Naive thymus-derived CD8-positive, alpha-beta T cell (primary cell): ENCODE measurements at regions of chr1 and their contacts with region 1.

Region 1: GRCh38 chr1:116418091-116418830 is 45.2 kb downstream of the ATP1A1 start:
- DNase-seq: peak; percentile 77 to 92 (median 87)
- ATAC-seq: peak; percentile 95 to 96
- H3K4me3 Mint-ChIP-seq: peak overlapping the region; percentile 86 to 94 (median 90)
- H3K27ac Mint-ChIP-seq: peak overlapping the region; percentile 93 to 99 (median 98)
- H3K4me1 Mint-ChIP-seq: peaks cover 11 to 52% (median 35%) of the 10 kb centered on the region in 4 donors
- H3K27me3 Mint-ChIP-seq: peaks cover 0 to 4% (median 0%) of the 10 kb centered on the region in 5 donors

Region 2: DNA sequence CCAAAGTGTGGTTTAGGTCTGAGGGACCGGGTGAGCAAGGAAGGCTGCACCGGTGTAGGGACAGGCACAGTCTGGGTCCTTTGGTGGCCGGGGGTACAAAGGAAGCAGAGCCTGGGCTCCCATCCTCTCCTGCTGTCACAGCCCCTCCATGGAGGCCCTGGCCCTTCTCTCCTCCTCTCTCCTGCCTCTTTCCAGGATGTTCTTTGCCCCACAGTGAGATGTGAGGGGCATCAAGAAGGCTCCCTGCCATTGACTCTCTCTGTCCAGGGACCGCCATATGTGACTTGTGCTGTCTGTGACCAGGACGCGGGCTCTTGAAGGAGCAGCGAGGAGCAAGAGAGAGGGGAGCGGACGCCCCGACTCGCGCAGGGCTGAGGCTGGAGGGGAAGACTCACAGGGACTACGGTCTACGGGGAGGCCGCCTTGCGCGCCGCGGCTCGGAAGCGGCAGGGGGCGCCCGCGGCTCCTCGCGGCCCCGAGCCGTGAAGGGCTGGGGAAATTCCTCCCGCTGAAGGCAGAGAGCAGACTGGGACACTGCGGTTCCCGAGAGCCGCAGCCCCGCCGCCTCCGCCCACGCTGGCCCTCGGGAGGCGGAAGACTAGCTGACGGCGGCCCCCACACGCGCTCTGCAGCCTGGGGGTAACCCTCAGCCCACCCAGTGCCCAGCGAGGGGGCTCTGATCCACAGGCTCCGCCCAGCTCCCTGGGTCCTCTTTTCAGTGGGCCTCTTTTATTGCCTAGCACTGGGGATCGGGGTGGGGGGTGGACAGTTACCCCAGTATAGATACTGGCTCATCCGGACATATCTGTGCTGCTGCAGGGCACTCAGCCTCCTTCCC is 266.3 kb before region 1 on chr1:
- POLR2A ChIA-PET with region 1: interaction called, 12 read pairs
- DNase-seq: peak; percentile 70 to 82 (median 76)
- ATAC-seq: peak; percentile 90 to 95
- H3K4me3 Mint-ChIP-seq: peak overlapping the region; percentile 75 to 89 (median 85)
- H3K27ac Mint-ChIP-seq: peak overlapping the region; percentile 85 to 97 (median 94)
- H3K4me1 Mint-ChIP-seq: peaks cover 21 to 36% (median 30%) of the 10 kb centered on the region in 4 donors
- H3K27me3 Mint-ChIP-seq: no peaks in the 10 kb centered on the region

Region 3: GRCh38 chr1:116372587-116373444 is 45.4 kb before region 1 on chr1 and contains the start of gene ATP1A1:
- POLR2A ChIA-PET with region 1: interaction called, 67 read pairs
- DNase-seq: peak; percentile 94 to 99 (median 97)
- ATAC-seq: peak; percentile 61 to 72
- H3K4me3 Mint-ChIP-seq: peak within 1 kb of the TSS; percentile 93 to 99 (median 97)
- H3K27ac Mint-ChIP-seq: peak within 1 kb of the TSS; percentile 92 to 99 (median 98)
- H3K4me1 Mint-ChIP-seq: peaks cover 28 to 55% (median 49%) of the 10 kb centered on the region in 4 donors
- H3K27me3 Mint-ChIP-seq: no peaks in the 10 kb centered on the region
- polyA plus RNA-seq, gene ATP1A1: 59.1 to 65.0 (median 60.6) TPM

Region 4: GRCh38 chr1:116401646-116402176 is 16.6 kb before region 1 on chr1:
- POLR2A ChIA-PET with region 1: interaction called, 11 read pairs
- DNase-seq: no peak
- ATAC-seq: no peak
- H3K4me3 Mint-ChIP-seq: no peak overlapping the region
- H3K27ac Mint-ChIP-seq: peak overlapping the region; percentile 30 to 95 (median 81)
- H3K4me1 Mint-ChIP-seq: peaks cover 21 to 40% (median 29%) of the 10 kb centered on the region in 4 donors
- H3K27me3 Mint-ChIP-seq: no peaks in the 10 kb centered on the region

Region 5: GRCh38 chr1:116429821-116430374 is 11.6 kb after region 1 on chr1:
- POLR2A ChIA-PET with region 1: interaction called, 14 read pairs
- DNase-seq: no peak
- ATAC-seq: no peak
- H3K4me3 Mint-ChIP-seq: peak overlapping the region in 1 of 10 donors; percentile 54
- H3K27ac Mint-ChIP-seq: peak overlapping the region in 1 of 10 donors; percentile 6
- H3K4me1 Mint-ChIP-seq: no peaks in the 10 kb centered on the region
- H3K27me3 Mint-ChIP-seq: peaks cover 0 to 2% (median 0%) of the 10 kb centered on the region in 5 donors

Region 6: DNA sequence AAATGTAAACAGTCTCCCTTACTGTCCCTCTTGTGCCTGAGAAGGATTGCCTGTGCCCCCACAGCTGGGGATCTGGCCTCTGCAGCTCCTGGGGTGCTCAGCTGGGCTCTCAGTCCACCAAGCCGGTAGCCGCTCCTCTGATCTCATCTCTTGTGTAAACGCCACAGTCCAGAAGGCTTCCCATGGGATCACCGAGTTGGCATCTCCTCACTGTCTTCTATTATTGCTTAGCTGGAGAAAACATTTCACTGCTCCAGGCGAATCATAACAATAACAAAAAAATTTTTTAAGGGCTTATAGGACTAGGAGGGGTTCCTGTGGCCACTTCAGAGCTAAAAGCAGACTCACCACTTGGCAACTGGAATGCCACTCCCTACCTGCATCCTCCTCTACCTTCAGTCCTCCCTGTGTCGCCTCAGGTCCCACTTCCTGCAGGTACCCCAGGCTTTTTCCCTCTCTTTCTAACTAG is 30.6 kb after region 1 on chr1:
- POLR2A ChIA-PET with region 1: no interaction called
- DNase-seq: no peak
- ATAC-seq: no peak
- H3K4me3 Mint-ChIP-seq: no peak overlapping the region
- H3K27ac Mint-ChIP-seq: no peak overlapping the region
- H3K4me1 Mint-ChIP-seq: no peaks in the 10 kb centered on the region
- H3K27me3 Mint-ChIP-seq: peaks cover 7 to 22% (median 13%) of the 10 kb centered on the region in 5 donors

Region 7: GRCh38 chr1:116806245-116806644 is 388.0 kb after region 1 on chr1:
- POLR2A ChIA-PET with region 1: no interaction called
- DNase-seq: peak in 4 of 10 donors; percentile 20 to 33 (median 27)
- ATAC-seq: peak; percentile 36 to 57
- H3K4me3 Mint-ChIP-seq: peak overlapping the region in 4 of 10 donors; percentile 20 to 85 (median 62)
- H3K27ac Mint-ChIP-seq: peak overlapping the region in 8 of 10 donors; percentile 8 to 93 (median 88)
- H3K4me1 Mint-ChIP-seq: peaks cover 19 to 69% (median 50%) of the 10 kb centered on the region in 4 donors
- H3K27me3 Mint-ChIP-seq: no peaks in the 10 kb centered on the region